ENCODE measurements at regions of chr3 and their contacts with region 1.

Region 1: GRCh38 chr3:12568747-12569146 is 11.9 kb downstream of the MKRN2 start:
- DNase-seq: no peak
- ATAC-seq: no peak
- H3K4me3 ChIP-seq: no peak overlapping the region
- H3K27ac ChIP-seq: no peak overlapping the region
- H3K4me1 ChIP-seq: no peaks in the 10 kb centered on the region
- H3K27me3 ChIP-seq: no peaks in the 10 kb centered on the region
- CTCF ChIP-seq: no peak
- EP300 ChIP-seq: no peak
- POLR2A ChIP-seq: no peak
- RAD21 ChIP-seq: no peak

Region 2: GRCh38 chr3:12579905-12580304 is 11.2 kb after region 1 on chr3:
- CTCF ChIA-PET with region 1: no interaction called
- POLR2A ChIA-PET with region 1: interaction called, 23 read pairs
- in situ Hi-C with region 1: no loop called
- intact Hi-C with region 1: no loop called
- DNase-seq: no peak
- ATAC-seq: no peak
- H3K4me3 ChIP-seq: no peak overlapping the region
- H3K27ac ChIP-seq: no peak overlapping the region
- H3K4me1 ChIP-seq: no peaks in the 10 kb centered on the region; a peak in 2 of 5 replicates
- H3K27me3 ChIP-seq: no peaks in the 10 kb centered on the region
- CTCF ChIP-seq: no peak
- EP300 ChIP-seq: no peak
- POLR2A ChIP-seq: no peak
- RAD21 ChIP-seq: no peak